Activated CD8-positive, alpha-beta memory T cell treated with anti-CD3 and anti-CD28 coated beads, Interleukin-2, amount 10 ng/mL, durations not matched to agents 7 days and 5 days (primary cell): ENCODE measurements at regions of chr3 and their contacts with region 1.

Region 1: DNA sequence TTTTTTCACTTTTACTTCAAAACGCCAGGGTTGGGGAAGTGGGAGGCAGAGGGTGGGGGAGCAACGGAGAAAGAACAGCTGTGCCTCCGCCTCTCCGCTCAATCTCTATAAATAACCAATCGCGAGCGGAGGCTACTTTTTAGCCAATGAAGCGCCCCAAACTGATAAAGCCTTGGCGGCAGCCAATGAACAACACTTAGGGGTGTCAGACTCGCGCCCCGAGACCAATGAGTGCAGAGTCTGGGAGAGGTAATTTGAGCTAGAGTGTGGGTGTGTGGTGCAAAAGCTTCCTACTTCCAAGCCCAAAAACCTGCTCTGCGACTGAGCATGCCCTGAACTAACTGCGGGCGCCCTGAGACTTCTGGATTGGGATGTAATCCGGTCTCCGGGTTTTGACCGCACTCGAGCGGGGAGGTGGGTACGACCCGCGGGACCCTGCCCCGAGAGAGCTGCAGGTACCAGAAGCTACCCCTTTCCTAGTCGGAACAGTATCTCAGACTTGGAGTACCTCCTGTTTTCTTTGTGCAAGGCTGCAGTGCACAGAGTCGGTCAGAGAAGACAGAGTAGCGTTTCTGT is 800 bp upstream of the RAP2B start:
- DNase-seq: peak; percentile 97
- ATAC-seq: peak; percentile 83
- H3K4me3 Mint-ChIP-seq: peak overlapping the region; percentile 99
- H3K27ac Mint-ChIP-seq: peak overlapping the region; percentile 95
- H3K4me1 Mint-ChIP-seq: peaks cover 34% of the 10 kb centered on the region
- H3K27me3 Mint-ChIP-seq: no peaks in the 10 kb centered on the region

Region 2: DNA sequence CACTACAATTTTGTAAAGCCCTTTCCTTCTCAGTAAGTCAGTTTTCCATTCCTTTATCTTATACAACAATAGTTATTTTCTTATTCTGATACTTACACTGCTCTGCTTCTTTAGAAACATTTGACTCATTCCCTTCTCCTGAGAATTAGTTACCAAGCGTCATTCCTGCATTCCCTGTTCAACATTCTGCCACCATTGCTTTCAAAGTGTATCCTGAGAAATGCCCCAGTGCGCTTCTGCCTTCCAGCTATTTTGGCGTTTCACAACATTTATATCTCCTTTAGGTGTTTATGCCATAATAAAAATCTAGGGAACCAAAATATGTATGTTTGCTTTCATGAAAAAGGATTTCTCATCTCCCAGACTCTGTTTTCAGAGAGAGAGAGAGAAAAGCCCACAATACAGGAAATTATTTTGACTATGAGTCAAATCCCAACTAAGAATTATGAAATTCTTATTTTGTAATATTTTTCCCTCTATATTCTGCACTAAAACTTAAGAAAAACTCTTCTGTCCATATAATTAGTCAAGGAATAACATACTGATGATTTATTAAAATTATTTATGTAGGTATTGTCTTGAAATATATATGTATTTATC is 117.4 kb before region 1 on chr3:
- CTCF ChIA-PET with region 1: interaction called, 20 read pairs
- DNase-seq: no peak
- ATAC-seq: no peak
- H3K4me3 Mint-ChIP-seq: no peak overlapping the region
- H3K27ac Mint-ChIP-seq: no peak overlapping the region
- H3K4me1 Mint-ChIP-seq: peaks cover 6% of the 10 kb centered on the region
- H3K27me3 Mint-ChIP-seq: no peaks in the 10 kb centered on the region

Region 3: DNA sequence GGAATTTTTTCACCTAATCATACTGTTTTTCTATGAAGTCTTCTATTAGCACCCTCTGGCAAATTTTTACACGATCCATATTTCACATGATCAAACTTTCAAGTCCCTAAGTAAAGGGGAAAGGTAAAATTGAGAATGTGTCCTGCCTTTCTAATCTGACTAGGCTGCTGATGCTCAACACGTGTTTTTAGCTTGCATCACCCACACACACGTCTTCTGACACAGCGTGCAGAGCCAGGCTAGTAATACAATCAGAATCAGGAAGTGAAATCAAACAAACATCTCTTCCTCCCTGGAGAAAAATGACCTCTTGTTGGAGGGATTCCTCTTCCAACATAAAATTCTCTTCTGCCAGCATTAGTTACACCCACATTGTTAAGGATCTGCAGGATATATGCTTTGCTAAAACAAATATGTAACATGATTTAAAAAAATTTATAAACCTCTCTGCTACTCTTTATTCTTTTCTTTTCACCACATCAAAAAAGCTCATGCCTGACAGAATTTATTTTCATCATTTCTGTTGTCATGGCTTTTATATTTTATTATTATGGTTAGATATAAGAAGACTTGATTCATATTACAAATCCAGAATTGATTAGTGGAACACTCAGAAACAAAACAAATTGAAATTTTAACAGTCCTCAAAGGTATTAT is 123.2 kb after region 1 on chr3:
- CTCF ChIA-PET with region 1: interaction called, 35 read pairs
- DNase-seq: peak; percentile 73
- ATAC-seq: peak; percentile 79
- H3K4me3 Mint-ChIP-seq: no peak overlapping the region
- H3K27ac Mint-ChIP-seq: peak overlapping the region; percentile 82
- H3K4me1 Mint-ChIP-seq: peaks cover 38% of the 10 kb centered on the region
- H3K27me3 Mint-ChIP-seq: no peaks in the 10 kb centered on the region

Region 4: DNA sequence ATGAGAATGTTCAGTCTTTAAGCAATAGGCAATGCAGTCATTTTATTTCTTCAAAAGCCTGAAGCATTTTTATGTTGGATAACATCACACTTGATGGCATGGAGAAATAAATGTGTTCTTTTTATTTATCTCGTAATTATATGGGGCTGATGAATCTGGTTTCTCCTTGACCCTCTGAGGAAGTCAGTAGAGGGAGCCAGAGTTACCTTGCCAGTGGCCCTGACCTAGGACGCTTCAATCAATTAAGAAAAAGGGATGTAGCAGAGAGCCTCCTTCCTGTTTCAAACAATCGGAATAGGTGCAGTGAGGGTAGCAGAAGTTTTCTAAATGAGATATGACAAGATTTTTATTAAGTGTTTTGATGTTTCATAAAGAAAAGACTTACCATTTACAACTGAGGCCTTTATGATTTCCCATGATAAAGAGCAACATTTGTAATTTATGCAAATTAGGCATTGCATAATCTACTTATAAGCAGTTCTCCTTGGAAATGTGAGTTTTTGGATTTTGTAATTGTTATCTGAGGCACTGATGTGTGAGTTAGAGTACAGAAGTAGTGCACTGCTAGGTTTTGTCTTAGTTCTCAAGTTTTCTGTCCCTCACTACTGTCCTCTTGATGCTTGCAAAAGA is 129.9 kb after region 1 on chr3:
- CTCF ChIA-PET with region 1: interaction called, 35 read pairs
- DNase-seq: no peak
- ATAC-seq: no peak
- H3K4me3 Mint-ChIP-seq: no peak overlapping the region
- H3K27ac Mint-ChIP-seq: no peak overlapping the region
- H3K4me1 Mint-ChIP-seq: peaks cover 33% of the 10 kb centered on the region
- H3K27me3 Mint-ChIP-seq: no peaks in the 10 kb centered on the region